ENCODE measurements at regions of chr12 and their contacts with region 1.

Region 1: GRCh38 chr12:18320036-18320617 is 58.8 kb downstream of the PIK3C2G start:
- DNase-seq: peak; percentile 48
- H3K4me3 ChIP-seq: no peak overlapping the region
- H3K27ac ChIP-seq: no peak overlapping the region
- H3K4me1 ChIP-seq: no peaks in the 10 kb centered on the region
- H3K27me3 ChIP-seq: no peaks in the 10 kb centered on the region
- CTCF ChIP-seq: peak; percentile 19 to 38
- POLR2A ChIP-seq: no peak

Region 2: DNA sequence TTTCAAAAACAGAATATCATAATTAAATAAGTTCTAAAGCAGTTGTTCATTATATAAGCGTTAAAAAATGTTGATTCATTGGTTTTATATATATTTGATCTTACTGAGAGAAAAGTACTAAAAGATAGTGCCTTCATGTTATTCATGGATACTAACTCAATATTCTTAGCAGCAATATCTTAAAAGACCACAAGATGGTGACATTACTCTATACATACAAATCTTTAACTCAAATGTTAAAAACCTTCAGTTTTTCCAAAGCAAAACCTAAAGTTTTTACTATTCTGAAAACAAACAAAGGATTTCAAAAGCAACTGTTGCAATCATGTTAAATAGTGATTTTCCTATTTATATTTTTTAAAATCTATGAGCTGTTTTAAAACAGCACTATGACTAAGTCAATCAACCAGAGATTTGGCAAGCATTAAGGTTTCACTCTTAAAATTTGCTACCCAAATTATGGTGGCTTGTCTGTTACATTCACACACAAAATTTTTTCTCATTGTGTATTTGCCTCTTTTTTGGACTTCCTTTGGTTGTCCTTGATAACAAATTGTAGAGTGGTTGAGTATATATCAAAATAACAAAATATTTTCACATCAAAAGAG is 180.0 kb before region 1 on chr12:
- CTCF ChIA-PET with region 1: interaction called, 11 read pairs
- POLR2A ChIA-PET with region 1: no interaction called
- dilution Hi-C with region 1: no loop called
- intact Hi-C with region 1: loop called (anchors 2 kb)
- DNase-seq: peak; percentile 20
- H3K4me3 ChIP-seq: no peak overlapping the region
- H3K27ac ChIP-seq: no peak overlapping the region
- H3K4me1 ChIP-seq: no peaks in the 10 kb centered on the region
- H3K27me3 ChIP-seq: no peaks in the 10 kb centered on the region
- CTCF ChIP-seq: no peak
- POLR2A ChIP-seq: no peak

Region 3: DNA sequence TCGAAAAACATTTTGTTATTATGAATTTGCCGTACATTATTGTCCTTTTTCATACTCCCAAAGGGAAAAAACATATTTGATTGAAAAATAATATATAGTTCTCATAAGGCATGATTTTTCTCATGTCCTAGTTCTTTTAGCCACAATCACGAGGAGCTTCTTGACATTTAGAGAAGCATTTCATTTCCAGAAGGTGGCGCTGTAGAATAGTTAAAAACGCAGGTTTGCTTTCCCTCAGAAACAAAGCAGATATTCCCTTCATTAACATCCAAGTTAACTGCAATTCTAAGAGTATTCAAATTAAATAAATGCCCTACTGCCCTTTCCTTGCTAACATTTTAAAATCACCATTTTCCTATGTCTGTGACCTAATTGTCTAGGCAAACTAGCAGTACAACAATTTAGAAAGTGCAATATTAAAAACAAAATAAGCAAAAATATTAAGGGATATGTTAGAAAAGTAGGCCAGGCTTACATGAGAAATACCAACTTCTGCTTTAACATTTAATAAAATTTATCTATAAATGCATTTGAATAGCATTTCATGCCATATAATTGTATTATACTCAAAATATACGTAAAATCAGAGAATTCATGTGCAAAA is 69.7 kb before region 1 on chr12:
- CTCF ChIA-PET with region 1: interaction called, 173 read pairs
- POLR2A ChIA-PET with region 1: no interaction called
- dilution Hi-C with region 1: no loop called
- intact Hi-C with region 1: loop called (anchors 1 kb)
- DNase-seq: peak; percentile 52
- H3K4me3 ChIP-seq: no peak overlapping the region
- H3K27ac ChIP-seq: no peak overlapping the region
- H3K4me1 ChIP-seq: no peaks in the 10 kb centered on the region
- H3K27me3 ChIP-seq: no peaks in the 10 kb centered on the region
- CTCF ChIP-seq: peak; percentile 47 to 53
- POLR2A ChIP-seq: no peak

Region 4: DNA sequence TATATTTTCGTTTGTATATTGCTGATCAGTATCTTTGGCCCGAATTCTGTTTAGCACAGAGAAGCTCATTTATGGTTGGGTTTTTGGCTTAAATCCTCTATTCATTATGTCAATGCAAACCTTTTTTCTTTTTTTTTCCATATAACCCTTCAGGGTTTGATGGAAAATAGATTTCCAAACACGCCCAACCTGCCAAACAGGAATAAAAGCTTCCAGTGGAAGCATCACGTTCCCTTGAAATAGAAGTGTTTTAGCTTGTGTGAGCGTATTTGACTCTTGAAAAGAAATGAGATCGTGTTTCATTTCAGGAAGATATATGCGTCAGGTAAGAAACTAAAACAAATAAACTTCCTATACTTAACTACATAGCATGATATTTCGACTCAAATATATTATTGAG is 58.9 kb before region 1 on chr12 and contains the start of gene PIK3C2G:
- CTCF ChIA-PET with region 1: interaction called, 13 read pairs
- POLR2A ChIA-PET with region 1: no interaction called
- dilution Hi-C with region 1: no loop called
- intact Hi-C with region 1: no loop called
- DNase-seq: no peak
- H3K4me3 ChIP-seq: no peak within 1 kb of the TSS
- H3K27ac ChIP-seq: no peak within 1 kb of the TSS
- H3K4me1 ChIP-seq: no peaks in the 10 kb centered on the region
- H3K27me3 ChIP-seq: no peaks in the 10 kb centered on the region
- CTCF ChIP-seq: no peak
- POLR2A ChIP-seq: no peak
- total RNA-seq, gene PIK3C2G: not detected in 2 replicates

Region 5: DNA sequence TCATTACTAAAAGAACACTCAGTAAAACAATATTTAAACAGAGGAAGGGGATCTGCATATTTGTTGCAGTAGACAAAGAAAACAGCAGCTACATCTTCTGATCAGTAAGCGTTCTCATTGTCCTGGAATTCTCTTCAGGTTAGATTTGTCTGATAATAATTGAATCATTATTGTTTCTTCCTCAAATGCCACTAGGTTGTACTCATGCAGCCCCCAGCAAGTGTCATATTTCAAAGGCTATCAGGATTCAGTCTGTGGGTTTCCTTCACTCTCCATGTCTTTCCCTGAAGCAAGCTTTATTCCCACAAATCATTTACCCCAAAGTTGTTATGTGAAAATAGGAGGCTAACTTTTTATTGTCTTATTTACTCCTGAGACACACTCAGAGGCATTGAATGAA is 44.1 kb before region 1 on chr12:
- CTCF ChIA-PET with region 1: interaction called, 11 read pairs
- POLR2A ChIA-PET with region 1: no interaction called
- dilution Hi-C with region 1: no loop called
- intact Hi-C with region 1: no loop called
- DNase-seq: no peak
- H3K4me3 ChIP-seq: no peak overlapping the region
- H3K27ac ChIP-seq: no peak overlapping the region
- H3K4me1 ChIP-seq: peaks cover 8% of the 10 kb centered on the region
- H3K27me3 ChIP-seq: no peaks in the 10 kb centered on the region
- CTCF ChIP-seq: no peak
- POLR2A ChIP-seq: no peak

Region 6: DNA sequence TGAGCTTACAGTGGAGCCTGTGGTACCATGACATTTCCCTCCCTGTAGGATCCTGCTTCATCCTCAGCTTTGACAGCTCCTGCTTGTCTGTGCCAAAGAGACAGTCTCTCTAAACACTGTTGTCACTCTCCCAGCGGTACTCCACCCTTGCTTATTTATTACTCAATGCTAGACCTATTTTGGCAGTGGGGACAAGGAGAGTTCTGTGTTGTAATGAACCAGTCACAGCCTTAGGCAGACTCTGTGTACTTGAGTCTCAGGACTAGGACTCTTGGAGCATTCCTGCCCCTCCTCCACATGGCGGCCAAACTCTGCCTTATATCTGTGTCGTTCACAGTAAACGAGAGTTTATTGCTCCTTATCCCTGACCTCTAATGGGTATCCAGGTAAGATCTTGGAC is 12.0 kb after region 1 on chr12:
- CTCF ChIA-PET with region 1: interaction called, 14 read pairs
- POLR2A ChIA-PET with region 1: no interaction called
- dilution Hi-C with region 1: no loop called
- intact Hi-C with region 1: no loop called
- DNase-seq: no peak
- H3K4me3 ChIP-seq: no peak overlapping the region
- H3K27ac ChIP-seq: no peak overlapping the region
- H3K4me1 ChIP-seq: no peaks in the 10 kb centered on the region
- H3K27me3 ChIP-seq: no peaks in the 10 kb centered on the region
- CTCF ChIP-seq: no peak
- POLR2A ChIP-seq: no peak

Region 7: GRCh38 chr12:18737819-18738218 is 417.7 kb after region 1 on chr12 and contains the starts of genes CAPZA3 and PLCZ1:
- CTCF ChIA-PET with region 1: no interaction called
- POLR2A ChIA-PET with region 1: no interaction called
- dilution Hi-C with region 1: no loop called
- intact Hi-C with region 1: no loop called
- DNase-seq: no peak
- H3K4me3 ChIP-seq: no peak within 1 kb of the TSS
- H3K27ac ChIP-seq: no peak within 1 kb of the TSS
- H3K4me1 ChIP-seq: no peaks in the 10 kb centered on the region
- H3K27me3 ChIP-seq: no peaks in the 10 kb centered on the region
- CTCF ChIP-seq: no peak
- POLR2A ChIP-seq: no peak
- total RNA-seq, gene CAPZA3: not detected in 2 replicates
- total RNA-seq, gene PLCZ1: not detected in 2 replicates